Heart right ventricle (tissue), 16 donors: ENCODE measurements at regions of chr12 and their contacts with region 1.

Region 1: GRCh38 chr12:51334764-51335163 is 10.8 kb upstream of the BIN2 start:
- DNase-seq: no peak
- ATAC-seq: no peak
- H3K4me3 ChIP-seq: no peak overlapping the region
- H3K27ac ChIP-seq: no peak overlapping the region
- H3K4me1 ChIP-seq: peaks cover 0 to 25% (median 0%) of the 10 kb centered on the region in 9 donors
- H3K27me3 ChIP-seq: no peaks in the 10 kb centered on the region
- CTCF ChIP-seq: no peak

Region 2: GRCh38 chr12:51285841-51286240 is 48.9 kb before region 1 on chr12:
- intact Hi-C with region 1: loop called in 1 of 10 experiments (anchors 5 kb)
- DNase-seq: no peak
- ATAC-seq: no peak
- H3K4me3 ChIP-seq: no peak overlapping the region
- H3K27ac ChIP-seq: no peak overlapping the region
- H3K4me1 ChIP-seq: no peaks in the 10 kb centered on the region
- H3K27me3 ChIP-seq: no peaks in the 10 kb centered on the region
- CTCF ChIP-seq: no peak